Transverse colon (tissue), 4 donors: ENCODE measurements at regions of chr4 and their contacts with region 1.

Region 1: GRCh38 chr4:5780831-5781480 is 70.0 kb downstream of the EVC start:
- DNase-seq: no peak
- H3K4me3 ChIP-seq: no peak overlapping the region
- H3K27ac ChIP-seq: no peak overlapping the region
- H3K4me1 ChIP-seq: no peaks in the 10 kb centered on the region
- H3K27me3 ChIP-seq: no peaks in the 10 kb centered on the region
- CTCF ChIP-seq: no peak
- EP300 ChIP-seq: no peak
- POLR2A ChIP-seq: no peak

Region 2: GRCh38 chr4:5812506-5813229 is 31.7 kb after region 1 on chr4:
- in situ Hi-C with region 1: no loop called
- intact Hi-C with region 1: no loop called
- DNase-seq: no peak
- H3K4me3 ChIP-seq: no peak overlapping the region
- H3K27ac ChIP-seq: no peak overlapping the region
- H3K4me1 ChIP-seq: no peaks in the 10 kb centered on the region
- H3K27me3 ChIP-seq: no peaks in the 10 kb centered on the region
- CTCF ChIP-seq: peak; percentile 57 to 66 (median 61)
- EP300 ChIP-seq: no peak
- POLR2A ChIP-seq: no peak

Region 3: DNA sequence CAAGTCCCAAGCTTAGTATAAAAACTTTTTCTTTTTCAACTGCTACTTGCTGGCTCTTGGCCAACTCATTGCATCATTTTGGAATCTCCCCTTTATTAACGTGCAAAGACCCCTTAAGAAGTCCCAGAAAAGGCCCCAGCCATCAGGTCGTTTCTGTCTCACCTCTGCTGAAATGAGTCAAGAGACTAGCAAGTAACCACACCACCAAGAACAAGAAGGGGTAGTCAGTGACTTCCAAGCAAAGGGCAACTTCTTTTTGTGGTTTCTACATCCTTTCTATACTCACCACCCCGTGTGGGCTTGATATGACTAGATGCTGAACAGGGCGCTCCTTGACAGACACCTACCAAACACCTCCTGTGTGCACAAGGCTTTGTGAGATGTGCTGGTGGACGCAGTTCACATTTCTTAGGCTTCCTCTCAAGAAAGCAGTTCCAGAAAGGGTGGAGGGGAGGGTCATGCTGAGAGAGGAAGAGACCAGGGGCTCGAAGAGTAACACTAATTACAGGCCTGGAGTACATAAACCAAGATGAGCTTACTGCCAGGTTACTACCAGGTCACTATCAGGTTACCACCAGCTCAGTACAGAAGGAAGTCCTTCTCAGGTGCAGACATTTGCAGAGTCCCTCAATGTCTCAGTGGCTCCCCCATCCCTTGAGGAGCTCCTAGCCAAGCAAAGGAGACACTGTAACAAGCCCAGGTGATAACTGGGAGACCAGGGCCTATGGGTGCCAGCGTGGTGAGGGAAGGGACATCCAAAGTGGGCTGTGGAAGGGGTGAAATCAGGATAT is 400.1 kb after region 1 on chr4:
- in situ Hi-C with region 1: no loop called
- intact Hi-C with region 1: loop called (anchors 5 kb)
- DNase-seq: no peak
- H3K4me3 ChIP-seq: no peak overlapping the region
- H3K27ac ChIP-seq: no peak overlapping the region
- H3K4me1 ChIP-seq: no peaks in the 10 kb centered on the region
- H3K27me3 ChIP-seq: no peaks in the 10 kb centered on the region
- CTCF ChIP-seq: no peak
- EP300 ChIP-seq: no peak
- POLR2A ChIP-seq: no peak